ENCODE measurements at regions of chr17 and their contacts with region 1.

Region 1: DNA sequence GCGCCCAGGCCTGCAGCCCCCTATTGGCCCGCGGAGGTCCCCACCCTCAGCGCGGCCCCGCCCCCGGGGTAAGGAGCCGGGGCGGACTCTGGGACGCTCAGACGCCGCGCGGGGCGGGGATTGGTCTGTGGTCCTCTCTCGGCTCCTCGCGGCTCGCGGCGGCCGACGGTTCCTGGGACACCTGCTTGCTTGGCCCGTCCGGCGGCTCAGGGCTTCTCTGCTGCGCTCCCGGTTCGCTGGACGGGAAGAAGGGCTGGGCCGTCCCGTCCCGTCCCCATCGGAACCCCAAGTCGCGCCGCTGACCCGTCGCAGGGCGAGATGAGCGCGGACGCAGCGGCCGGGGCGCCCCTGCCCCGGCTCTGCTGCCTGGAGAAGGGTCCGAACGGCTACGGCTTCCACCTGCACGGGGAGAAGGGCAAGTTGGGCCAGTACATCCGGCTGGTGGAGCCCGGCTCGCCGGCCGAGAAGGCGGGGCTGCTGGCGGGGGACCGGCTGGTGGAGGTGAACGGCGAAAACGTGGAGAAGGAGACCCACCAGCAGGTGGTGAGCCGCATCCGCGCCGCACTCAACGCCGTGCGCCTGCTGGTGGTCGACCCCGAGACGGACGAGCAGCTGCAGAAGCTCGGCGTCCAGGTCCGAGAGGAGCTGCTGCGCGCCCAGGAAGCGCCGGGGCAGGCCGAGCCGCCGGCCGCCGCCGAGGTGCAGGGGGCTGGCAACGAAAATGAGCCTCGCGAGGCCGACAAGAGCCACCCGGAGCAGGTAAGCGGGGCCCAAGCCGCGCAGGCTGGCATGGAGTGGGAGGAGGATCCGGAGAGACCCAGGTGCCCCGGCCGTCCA is at the start of gene NHERF1:
- DNase-seq: peak; percentile 98
- H3K4me3 Mint-ChIP-seq: peak within 1 kb of the TSS; percentile 97
- H3K27ac Mint-ChIP-seq: peak within 1 kb of the TSS; percentile 83
- H3K4me1 Mint-ChIP-seq: peaks cover 39% of the 10 kb centered on the region
- H3K27me3 Mint-ChIP-seq: peaks cover 8% of the 10 kb centered on the region
- CTCF ChIP-seq: no peak
- total RNA-seq, gene NHERF1: 114 and 143 TPM in 2 replicates

Region 2: GRCh38 chr17:74605361-74605760 is 143.4 kb before region 1 on chr17:
- CTCF ChIA-PET with region 1: no interaction called
- intact Hi-C with region 1: no loop called
- DNase-seq: no peak
- H3K4me3 Mint-ChIP-seq: no peak overlapping the region
- H3K27ac Mint-ChIP-seq: no peak overlapping the region
- H3K4me1 Mint-ChIP-seq: no peaks in the 10 kb centered on the region
- H3K27me3 Mint-ChIP-seq: peaks cover 37% of the 10 kb centered on the region
- CTCF ChIP-seq: no peak

Region 3: GRCh38 chr17:74715144-74715543 is 33.6 kb before region 1 on chr17:
- CTCF ChIA-PET with region 1: no interaction called
- intact Hi-C with region 1: no loop called
- DNase-seq: peak; percentile 69
- H3K4me3 Mint-ChIP-seq: no peak overlapping the region
- H3K27ac Mint-ChIP-seq: no peak overlapping the region
- H3K4me1 Mint-ChIP-seq: no peaks in the 10 kb centered on the region
- H3K27me3 Mint-ChIP-seq: peaks cover 80% of the 10 kb centered on the region
- CTCF ChIP-seq: no peak

Region 4: DNA sequence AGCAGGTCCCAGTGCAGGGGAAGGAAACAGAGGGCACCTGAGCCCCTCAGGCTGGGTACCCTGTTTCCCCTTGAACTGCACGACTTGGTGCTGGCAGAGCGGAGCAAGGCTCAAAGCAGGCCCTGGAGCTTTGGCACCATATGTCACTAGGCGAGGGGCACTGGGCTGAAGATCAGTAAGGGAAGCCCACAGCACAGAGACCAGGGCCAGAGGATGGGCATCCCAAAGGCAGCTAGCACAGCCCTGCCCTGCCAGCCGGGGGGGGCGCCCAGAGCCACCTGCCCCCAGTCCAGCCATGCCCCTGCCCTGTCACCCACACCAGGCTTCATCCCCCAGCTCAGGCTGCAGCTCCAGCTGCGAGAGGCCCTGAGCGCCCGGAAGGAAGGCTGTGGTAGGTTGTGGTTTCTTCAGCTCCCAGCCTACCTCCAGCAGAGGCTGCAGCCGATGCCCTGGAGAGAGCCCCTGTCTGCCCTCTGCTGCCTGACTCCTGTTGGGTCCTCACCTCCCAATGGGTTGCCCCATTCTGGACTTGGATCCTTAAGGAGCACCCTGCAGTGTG is 10.6 kb after region 1 on chr17:
- CTCF ChIA-PET with region 1: interaction called, 28 read pairs
- intact Hi-C with region 1: no loop called
- DNase-seq: peak; percentile 55
- H3K4me3 Mint-ChIP-seq: peak overlapping the region; percentile 65
- H3K27ac Mint-ChIP-seq: peak overlapping the region; percentile 68
- H3K4me1 Mint-ChIP-seq: peaks cover 50% of the 10 kb centered on the region
- H3K27me3 Mint-ChIP-seq: no peaks in the 10 kb centered on the region
- CTCF ChIP-seq: peak; percentile 25

Region 5: DNA sequence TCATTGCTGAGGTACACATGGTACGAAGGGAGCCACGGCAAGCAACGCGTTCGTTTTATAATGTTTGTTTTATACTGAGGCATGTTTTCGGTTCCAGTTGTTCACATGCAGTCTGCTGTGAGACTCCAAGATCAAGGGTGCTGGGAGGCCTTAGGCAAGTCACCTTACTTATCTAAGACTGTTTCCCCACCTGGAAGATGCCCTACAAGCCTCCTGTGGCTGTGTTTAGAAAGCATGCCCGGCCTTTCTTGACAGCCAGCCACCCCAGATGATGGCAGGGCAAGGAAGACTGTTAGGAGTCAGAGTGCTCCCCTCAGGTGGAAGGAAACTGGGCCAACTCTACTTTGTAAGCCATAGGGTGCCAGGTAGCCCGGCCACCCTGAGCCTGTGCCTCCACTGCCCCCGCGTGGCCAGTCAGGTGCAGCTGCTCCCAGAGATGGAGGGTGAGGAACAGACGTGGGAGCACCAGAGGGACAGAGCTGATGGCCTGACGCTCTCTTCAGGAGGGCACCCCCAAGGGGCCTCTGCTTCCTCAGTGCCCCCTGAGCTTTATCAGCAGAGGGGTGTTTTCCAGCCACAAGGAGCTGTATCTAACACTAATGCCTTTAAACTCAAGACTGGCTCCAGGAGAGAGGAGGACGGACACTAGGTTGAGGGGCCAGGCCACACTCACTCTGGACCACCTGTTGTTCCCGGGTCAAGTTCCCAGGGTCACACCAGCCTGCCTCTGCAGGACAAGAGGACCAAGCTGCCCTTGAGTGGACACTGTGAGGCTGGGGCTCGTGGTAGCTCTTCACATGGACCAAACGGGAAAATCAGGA is 22.0 kb after region 1 on chr17:
- CTCF ChIA-PET with region 1: interaction called, 38 read pairs
- intact Hi-C with region 1: loop called (anchors 1 kb)
- DNase-seq: peak; percentile 91
- H3K4me3 Mint-ChIP-seq: no peak overlapping the region
- H3K27ac Mint-ChIP-seq: peak overlapping the region; percentile 67
- H3K4me1 Mint-ChIP-seq: peaks cover 37% of the 10 kb centered on the region
- H3K27me3 Mint-ChIP-seq: no peaks in the 10 kb centered on the region
- CTCF ChIP-seq: peak; percentile 82

Region 6: GRCh38 chr17:74780443-74781238 is 31.9 kb after region 1 on chr17:
- CTCF ChIA-PET with region 1: interaction called, 10 read pairs
- intact Hi-C with region 1: loop called (anchors 5 kb)
- DNase-seq: peak; percentile 45
- H3K4me3 Mint-ChIP-seq: no peak overlapping the region
- H3K27ac Mint-ChIP-seq: no peak overlapping the region
- H3K4me1 Mint-ChIP-seq: peaks cover 10% of the 10 kb centered on the region
- H3K27me3 Mint-ChIP-seq: no peaks in the 10 kb centered on the region
- CTCF ChIP-seq: no peak

Region 7: GRCh38 chr17:74798239-74798707 is 49.5 kb after region 1 on chr17:
- CTCF ChIA-PET with region 1: no interaction called
- intact Hi-C with region 1: no loop called
- DNase-seq: no peak
- H3K4me3 Mint-ChIP-seq: no peak overlapping the region
- H3K27ac Mint-ChIP-seq: no peak overlapping the region
- H3K4me1 Mint-ChIP-seq: no peaks in the 10 kb centered on the region
- H3K27me3 Mint-ChIP-seq: no peaks in the 10 kb centered on the region
- CTCF ChIP-seq: no peak

Region 8: DNA sequence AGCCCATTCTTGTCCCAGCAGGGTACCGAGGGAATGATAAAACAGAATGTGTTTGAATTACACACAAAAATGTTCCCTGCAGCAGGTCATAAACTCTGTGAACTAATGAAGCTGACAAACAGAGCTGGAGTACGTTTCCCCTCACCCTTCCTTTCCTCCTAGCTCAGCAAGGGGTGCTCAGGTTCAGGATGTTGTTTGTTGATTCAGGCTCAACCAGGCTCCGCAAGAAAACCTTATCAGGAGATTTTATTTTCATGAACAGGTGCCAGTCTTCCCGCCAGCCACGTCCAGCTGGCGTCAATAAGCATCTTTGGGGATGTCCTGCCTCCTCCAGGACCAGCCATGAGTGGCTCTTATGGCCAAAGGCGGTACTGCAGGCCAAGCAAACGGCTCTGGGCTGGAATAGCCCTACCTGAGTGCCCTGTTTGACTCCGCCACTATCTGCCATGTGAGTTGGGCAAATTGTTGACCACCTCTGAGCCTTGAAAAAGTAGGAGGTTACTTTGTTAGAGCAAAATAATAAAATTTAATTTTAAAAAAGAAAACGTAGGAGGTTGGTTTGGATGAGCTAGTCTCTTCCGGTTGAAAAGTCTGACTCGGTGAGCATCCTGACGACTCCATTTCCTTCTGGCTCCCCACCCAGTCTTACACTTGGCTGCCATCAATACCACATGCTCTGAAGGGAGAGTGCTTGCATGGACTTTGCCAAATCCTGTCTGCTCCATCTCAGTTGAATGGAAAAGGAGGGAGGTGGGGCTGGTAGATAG is 357.1 kb after region 1 on chr17:
- CTCF ChIA-PET with region 1: no interaction called
- intact Hi-C with region 1: no loop called
- DNase-seq: peak; percentile 76
- H3K4me3 Mint-ChIP-seq: peak overlapping the region; percentile 20
- H3K27ac Mint-ChIP-seq: peak overlapping the region; percentile 90
- H3K4me1 Mint-ChIP-seq: peaks cover 19% of the 10 kb centered on the region
- H3K27me3 Mint-ChIP-seq: no peaks in the 10 kb centered on the region
- CTCF ChIP-seq: peak; percentile 77